Activated CD8-positive, alpha-beta T cell treated with anti-CD3 and anti-CD28 coated beads, Interleukin-2, amount 10 ng/mL, durations not matched to agents 7 days and 5 days (primary cell): ENCODE measurements at regions of chr6 and their contacts with region 1.

Region 1: DNA sequence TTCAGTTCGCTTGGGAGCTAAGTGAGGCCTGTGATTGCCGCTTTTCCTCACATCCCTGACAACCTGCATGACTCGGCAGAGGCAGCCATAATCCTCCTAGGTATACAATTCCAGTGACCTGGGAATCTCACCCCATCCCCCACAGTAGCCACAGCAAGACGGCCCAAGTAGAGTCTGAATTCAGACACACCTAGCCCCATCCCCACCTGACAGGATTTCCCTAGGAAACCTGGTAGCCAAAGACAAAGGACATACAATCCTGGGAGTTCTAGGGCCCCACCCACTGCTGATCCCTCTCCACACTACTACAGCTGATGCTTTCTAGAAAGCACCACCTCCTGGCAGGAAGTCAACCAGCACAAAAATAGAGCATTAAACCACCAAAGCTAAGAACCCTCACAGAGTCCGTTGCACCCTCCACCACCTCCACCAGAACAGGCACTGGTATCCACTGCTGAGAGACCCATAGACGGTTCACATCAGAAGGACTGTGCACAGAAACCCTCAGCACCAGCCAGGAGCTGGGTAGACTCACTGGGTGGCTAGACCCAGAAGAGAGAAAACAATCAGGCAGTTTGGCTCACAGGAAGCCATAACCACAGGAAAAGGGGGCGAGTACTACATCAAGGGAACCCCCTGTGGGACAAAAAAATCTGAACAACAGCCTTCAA is 17.9 kb upstream of the RUNX2 start:
- DNase-seq: peak; percentile 65
- ATAC-seq: peak; percentile 82
- H3K4me3 Mint-ChIP-seq: peak overlapping the region; percentile 44
- H3K27ac Mint-ChIP-seq: peak overlapping the region; percentile 94
- H3K4me1 Mint-ChIP-seq: peaks cover 48% of the 10 kb centered on the region
- H3K27me3 Mint-ChIP-seq: no peaks in the 10 kb centered on the region

Region 2: GRCh38 chr6:45297320-45297719 is 12.9 kb before region 1 on chr6:
- CTCF ChIA-PET with region 1: interaction called, 10 read pairs
- POLR2A ChIA-PET with region 1: interaction called, 3 read pairs
- DNase-seq: no peak
- ATAC-seq: no peak
- H3K4me3 Mint-ChIP-seq: no peak overlapping the region
- H3K27ac Mint-ChIP-seq: no peak overlapping the region
- H3K4me1 Mint-ChIP-seq: peaks cover 28% of the 10 kb centered on the region
- H3K27me3 Mint-ChIP-seq: no peaks in the 10 kb centered on the region